ENCODE measurements at regions of chr11 and their contacts with region 1.

Region 1: GRCh38 chr11:76152086-76152681 is 54.1 kb downstream of the WNT11 start:
- DNase-seq: peak; percentile 60
- ATAC-seq: peak; percentile 87
- H3K4me3 ChIP-seq: peak overlapping the region; percentile 66
- H3K27ac ChIP-seq: peak overlapping the region; percentile 27
- H3K4me1 ChIP-seq: peaks cover 22% of the 10 kb centered on the region
- H3K27me3 ChIP-seq: no peaks in the 10 kb centered on the region
- CTCF ChIP-seq: peak; percentile 97 to 99 (median 98); a peak in 5 of 6 replicates
- EP300 ChIP-seq: no peak
- POLR2A ChIP-seq: 0 out of 2 replicates have a peak, but pooled peaks have one; percentile 19
- RAD21 ChIP-seq: peak; percentile 97

Region 2: DNA sequence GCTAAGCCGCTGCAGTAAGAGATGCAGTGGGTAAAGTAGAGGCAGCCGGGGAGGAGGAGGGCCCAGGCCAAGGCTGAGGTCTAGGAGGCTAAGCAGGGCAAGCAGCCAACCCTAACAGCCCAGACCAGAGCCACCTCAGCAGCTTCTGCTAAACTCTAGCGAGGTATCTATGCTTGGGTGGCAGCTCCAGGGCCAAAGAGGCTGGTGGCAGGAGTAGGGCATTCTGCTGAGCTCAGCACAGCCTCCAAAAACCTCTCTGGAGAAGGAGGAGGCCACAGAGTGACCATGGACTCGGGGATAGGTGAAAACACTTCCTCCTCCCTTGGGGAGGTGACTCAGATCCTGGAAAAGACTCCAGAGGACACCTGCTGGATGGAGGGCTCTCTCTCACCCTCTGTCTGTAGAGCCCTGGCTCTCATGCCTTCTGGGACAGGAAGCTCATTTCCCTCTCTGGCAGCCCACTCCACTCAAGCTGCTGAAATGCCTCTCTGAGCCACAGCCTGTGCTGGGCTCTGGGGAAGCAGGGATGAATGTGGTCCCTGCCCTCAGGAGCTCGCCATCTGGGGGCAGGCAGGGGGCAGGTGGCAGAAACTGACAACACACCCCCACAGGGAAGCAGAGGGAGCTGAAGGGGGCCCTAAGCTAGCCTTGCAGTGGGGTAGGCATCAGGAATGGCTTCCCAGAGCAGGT is 928.1 kb before region 1 on chr11:
- CTCF ChIA-PET with region 1: no interaction called
- POLR2A ChIA-PET with region 1: no interaction called
- RAD21 ChIA-PET with region 1: no interaction called
- SMC1A ChIA-PET with region 1: no interaction called
- in situ Hi-C with region 1: no loop called
- intact Hi-C with region 1: no loop called
- DNase-seq: no peak
- ATAC-seq: no peak
- H3K4me3 ChIP-seq: no peak overlapping the region
- H3K27ac ChIP-seq: no peak overlapping the region
- H3K4me1 ChIP-seq: no peaks in the 10 kb centered on the region
- H3K27me3 ChIP-seq: no peaks in the 10 kb centered on the region; a peak in 1 of 4 replicates
- CTCF ChIP-seq: no peak
- EP300 ChIP-seq: no peak
- POLR2A ChIP-seq: no peak
- RAD21 ChIP-seq: no peak

Region 3: DNA sequence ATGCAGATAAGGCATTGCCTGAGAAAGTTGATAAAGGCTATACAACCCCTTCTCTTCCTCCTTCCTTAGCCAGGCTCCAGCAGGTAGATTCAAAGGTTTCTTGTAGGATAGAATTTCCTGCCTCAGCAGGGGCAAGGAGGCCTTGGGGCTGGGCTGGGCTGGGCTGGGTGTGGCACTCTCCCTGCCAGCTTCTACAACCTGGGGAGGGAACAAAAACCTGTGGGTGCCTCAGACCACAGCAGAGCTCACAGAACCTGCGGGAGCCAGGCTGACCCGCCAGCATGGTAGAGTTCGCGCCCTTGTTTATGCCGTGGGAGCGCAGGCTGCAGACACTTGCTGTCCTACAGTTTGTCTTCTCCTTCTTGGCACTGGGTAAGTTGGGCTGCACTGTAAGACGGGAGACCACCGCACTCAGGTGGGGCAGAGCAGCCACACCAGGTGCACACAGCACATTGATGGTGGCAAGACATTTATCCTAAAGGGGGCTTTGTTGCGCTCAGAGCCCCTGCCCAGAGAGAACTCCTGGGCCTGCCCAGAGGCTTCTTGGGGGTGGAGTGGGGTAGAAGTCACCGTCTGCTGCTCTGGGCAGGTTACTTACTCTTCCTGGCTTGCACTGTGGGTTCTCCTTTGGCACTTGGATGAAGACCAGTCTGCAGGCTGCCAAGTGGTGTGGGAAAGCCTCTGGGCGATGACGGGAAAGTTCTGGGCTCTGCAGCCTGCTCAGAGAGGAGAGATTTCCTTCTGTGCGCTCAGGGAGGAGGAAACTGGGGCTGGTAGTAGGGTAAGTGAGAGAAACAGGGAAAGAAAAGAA is 434.4 kb before region 1 on chr11 and contains the start of gene MOGAT2:
- CTCF ChIA-PET with region 1: interaction called, 4 read pairs
- POLR2A ChIA-PET with region 1: no interaction called
- RAD21 ChIA-PET with region 1: interaction called, 4 read pairs
- SMC1A ChIA-PET with region 1: interaction called, 3 read pairs
- in situ Hi-C with region 1: no loop called
- intact Hi-C with region 1: loop called (anchors 2 kb)
- DNase-seq: no peak
- ATAC-seq: no peak
- H3K4me3 ChIP-seq: no peak within 1 kb of the TSS
- H3K27ac ChIP-seq: no peak within 1 kb of the TSS
- H3K4me1 ChIP-seq: peaks cover 11% of the 10 kb centered on the region
- H3K27me3 ChIP-seq: no peaks in the 10 kb centered on the region
- CTCF ChIP-seq: no peak
- EP300 ChIP-seq: no peak
- POLR2A ChIP-seq: no peak
- RAD21 ChIP-seq: no peak
- polyA plus RNA-seq, gene MOGAT2: 0.16 to 0.21 TPM

Region 4: DNA sequence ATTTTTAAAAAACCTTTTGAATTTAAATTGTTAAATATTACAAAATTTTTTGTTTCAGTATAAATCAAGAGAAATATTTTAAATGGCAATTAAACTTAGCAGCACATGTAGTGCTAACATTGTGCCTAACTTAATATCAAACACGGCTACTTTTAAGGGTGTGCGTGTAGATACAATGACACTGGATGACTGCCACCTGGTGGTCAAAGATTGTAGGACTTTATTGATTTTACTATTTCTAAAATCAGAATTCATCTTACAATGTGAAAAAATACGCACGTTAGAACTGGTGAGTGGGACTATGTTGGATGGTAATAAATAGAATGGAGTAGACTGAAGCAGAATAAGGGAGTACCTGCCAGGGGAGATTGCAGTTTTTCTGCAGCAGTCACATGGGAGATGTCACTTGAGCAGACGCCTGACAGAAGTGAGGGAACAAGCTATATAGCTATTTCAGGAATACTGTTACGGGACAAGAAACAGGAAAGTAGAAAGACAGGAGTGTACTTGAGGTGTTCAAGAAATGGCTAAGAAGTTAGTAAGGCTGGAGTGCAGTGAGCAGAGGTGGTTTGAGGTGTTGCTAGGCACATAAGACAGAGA is 284.3 kb before region 1 on chr11:
- CTCF ChIA-PET with region 1: interaction called, 30 read pairs
- POLR2A ChIA-PET with region 1: interaction called, 6 read pairs
- RAD21 ChIA-PET with region 1: interaction called, 18 read pairs
- SMC1A ChIA-PET with region 1: interaction called, 22 read pairs
- in situ Hi-C with region 1: no loop called
- intact Hi-C with region 1: no loop called
- DNase-seq: peak; percentile 24
- ATAC-seq: peak; percentile 84
- H3K4me3 ChIP-seq: no peak overlapping the region
- H3K27ac ChIP-seq: no peak overlapping the region
- H3K4me1 ChIP-seq: peaks cover 15% of the 10 kb centered on the region
- H3K27me3 ChIP-seq: no peaks in the 10 kb centered on the region
- CTCF ChIP-seq: peak; percentile 50 to 65 (median 65); a peak in 5 of 6 replicates
- EP300 ChIP-seq: no peak
- POLR2A ChIP-seq: no peak
- RAD21 ChIP-seq: peak; percentile 84

Region 5: DNA sequence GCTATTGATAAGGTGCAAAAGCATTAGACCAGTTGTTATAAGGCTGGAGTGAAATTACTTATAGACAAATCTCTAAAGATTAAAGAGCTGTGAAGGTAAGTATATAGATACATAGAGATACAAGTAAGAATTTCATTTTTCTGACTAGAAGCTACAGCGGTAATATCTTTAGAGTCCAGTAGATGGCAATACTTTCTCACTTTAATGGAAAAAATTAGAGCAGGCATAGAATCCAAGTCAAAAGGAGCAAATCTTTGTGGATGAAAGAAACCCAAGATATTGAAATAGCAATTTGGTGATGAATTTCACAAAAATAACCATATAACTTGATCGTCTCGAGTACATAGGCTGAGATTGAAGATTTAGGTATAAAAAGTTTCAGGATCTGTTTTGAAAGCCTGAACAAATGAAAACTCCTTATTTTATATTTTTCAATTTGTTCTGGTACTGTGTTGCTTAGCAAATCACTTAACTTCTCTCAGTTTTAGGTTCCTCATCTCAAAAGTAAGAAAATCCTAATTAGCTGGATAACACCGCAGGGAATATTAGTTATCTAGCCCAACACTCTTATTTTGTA is 255.3 kb before region 1 on chr11:
- CTCF ChIA-PET with region 1: interaction called, 139 read pairs
- POLR2A ChIA-PET with region 1: interaction called, 9 read pairs
- RAD21 ChIA-PET with region 1: interaction called, 75 read pairs
- SMC1A ChIA-PET with region 1: interaction called, 128 read pairs
- in situ Hi-C with region 1: loop called (anchors 5 kb)
- intact Hi-C with region 1: loop called (anchors 1 kb)
- DNase-seq: no peak
- ATAC-seq: peak; percentile 46
- H3K4me3 ChIP-seq: no peak overlapping the region
- H3K27ac ChIP-seq: no peak overlapping the region
- H3K4me1 ChIP-seq: peaks cover 8% of the 10 kb centered on the region
- H3K27me3 ChIP-seq: no peaks in the 10 kb centered on the region
- CTCF ChIP-seq: peak; percentile 55 to 62 (median 57)
- EP300 ChIP-seq: no peak
- POLR2A ChIP-seq: no peak
- RAD21 ChIP-seq: peak; percentile 77

Region 6: GRCh38 chr11:76120513-76121101 is 31.6 kb before region 1 on chr11:
- CTCF ChIA-PET with region 1: interaction called, 12 read pairs
- POLR2A ChIA-PET with region 1: no interaction called
- RAD21 ChIA-PET with region 1: interaction called, 5 read pairs
- SMC1A ChIA-PET with region 1: interaction called, 4 read pairs
- in situ Hi-C with region 1: no loop called
- intact Hi-C with region 1: no loop called
- DNase-seq: no peak
- ATAC-seq: no peak
- H3K4me3 ChIP-seq: no peak overlapping the region
- H3K27ac ChIP-seq: no peak overlapping the region
- H3K4me1 ChIP-seq: peaks cover 9% of the 10 kb centered on the region
- H3K27me3 ChIP-seq: no peaks in the 10 kb centered on the region
- CTCF ChIP-seq: no peak
- EP300 ChIP-seq: no peak
- POLR2A ChIP-seq: no peak
- RAD21 ChIP-seq: no peak

Region 7: DNA sequence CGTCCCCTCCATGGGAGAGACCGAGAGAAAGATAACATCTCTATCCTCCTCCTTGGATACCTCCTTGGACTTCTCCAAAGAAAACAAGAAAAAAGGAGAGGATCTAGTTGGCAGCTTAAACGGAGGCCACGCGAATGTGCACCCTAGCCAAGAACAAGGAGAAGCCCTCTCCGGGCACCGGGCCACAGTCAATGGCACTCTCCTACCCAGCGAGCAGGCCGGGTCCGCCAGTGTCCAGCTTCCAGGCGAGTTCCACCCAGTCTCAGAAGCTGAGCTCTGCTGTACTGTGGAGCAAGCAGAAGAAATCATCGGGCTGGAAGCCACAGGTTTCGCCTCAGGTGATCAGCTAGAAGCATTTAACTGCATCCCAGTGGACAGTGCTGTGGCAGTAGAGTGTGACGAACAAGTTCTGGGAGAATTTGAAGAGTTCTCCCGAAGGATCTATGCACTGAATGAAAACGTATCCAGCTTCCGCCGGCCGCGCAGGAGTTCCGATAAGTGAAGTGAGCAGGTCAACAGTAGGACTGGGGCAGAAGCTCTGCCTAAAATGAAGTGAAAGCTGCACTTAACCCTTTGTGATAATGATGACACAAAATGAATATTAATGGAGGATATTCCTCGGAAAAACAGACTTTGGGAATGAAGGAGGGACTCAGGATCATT is 11.1 kb before region 1 on chr11:
- CTCF ChIA-PET with region 1: interaction called, 9 read pairs
- POLR2A ChIA-PET with region 1: interaction called, 3 read pairs
- RAD21 ChIA-PET with region 1: interaction called, 10 read pairs
- SMC1A ChIA-PET with region 1: interaction called, 6 read pairs
- in situ Hi-C with region 1: no loop called
- intact Hi-C with region 1: no loop called
- DNase-seq: no peak
- ATAC-seq: no peak
- H3K4me3 ChIP-seq: no peak overlapping the region
- H3K27ac ChIP-seq: no peak overlapping the region
- H3K4me1 ChIP-seq: no peaks in the 10 kb centered on the region
- H3K27me3 ChIP-seq: no peaks in the 10 kb centered on the region
- CTCF ChIP-seq: no peak
- EP300 ChIP-seq: no peak
- POLR2A ChIP-seq: 0 out of 2 replicates have a peak, but pooled peaks have one; percentile 32
- RAD21 ChIP-seq: no peak

Region 8: GRCh38 chr11:76637491-76638269 is 485.5 kb after region 1 on chr11:
- CTCF ChIA-PET with region 1: no interaction called
- POLR2A ChIA-PET with region 1: no interaction called
- RAD21 ChIA-PET with region 1: no interaction called
- SMC1A ChIA-PET with region 1: no interaction called
- in situ Hi-C with region 1: no loop called
- intact Hi-C with region 1: no loop called
- DNase-seq: peak; percentile 67
- ATAC-seq: peak; percentile 92
- H3K4me3 ChIP-seq: no peak overlapping the region
- H3K27ac ChIP-seq: peak overlapping the region; percentile 38
- H3K4me1 ChIP-seq: peaks cover 22% of the 10 kb centered on the region
- H3K27me3 ChIP-seq: no peaks in the 10 kb centered on the region; a peak in 1 of 4 replicates
- CTCF ChIP-seq: no peak
- EP300 ChIP-seq: peak in 1 of 2 experiments; percentile 73; a peak in 2 of 4 replicates
- POLR2A ChIP-seq: peak; percentile 40; the same call in 1 of the 2 replicates
- RAD21 ChIP-seq: no peak

Measured in GM12878 (cell line).